Esophagus muscularis mucosa (tissue), 4 donors: ENCODE measurements at regions of chr9 and their contacts with region 1.

Region 1: GRCh38 chr9:92342825-92343488 is 17.2 kb downstream of the CENPP start:
- DNase-seq: no peak
- H3K4me3 ChIP-seq: no peak overlapping the region
- H3K27ac ChIP-seq: peak overlapping the region in 2 of 4 donors; percentile 8 to 37
- H3K4me1 ChIP-seq: peaks cover 0 to 18% (median 14%) of the 10 kb centered on the region in 4 donors
- H3K27me3 ChIP-seq: no peaks in the 10 kb centered on the region
- CTCF ChIP-seq: peak; percentile 30 to 46 (median 45)
- EP300 ChIP-seq: no peak
- POLR2A ChIP-seq: no peak

Region 2: DNA sequence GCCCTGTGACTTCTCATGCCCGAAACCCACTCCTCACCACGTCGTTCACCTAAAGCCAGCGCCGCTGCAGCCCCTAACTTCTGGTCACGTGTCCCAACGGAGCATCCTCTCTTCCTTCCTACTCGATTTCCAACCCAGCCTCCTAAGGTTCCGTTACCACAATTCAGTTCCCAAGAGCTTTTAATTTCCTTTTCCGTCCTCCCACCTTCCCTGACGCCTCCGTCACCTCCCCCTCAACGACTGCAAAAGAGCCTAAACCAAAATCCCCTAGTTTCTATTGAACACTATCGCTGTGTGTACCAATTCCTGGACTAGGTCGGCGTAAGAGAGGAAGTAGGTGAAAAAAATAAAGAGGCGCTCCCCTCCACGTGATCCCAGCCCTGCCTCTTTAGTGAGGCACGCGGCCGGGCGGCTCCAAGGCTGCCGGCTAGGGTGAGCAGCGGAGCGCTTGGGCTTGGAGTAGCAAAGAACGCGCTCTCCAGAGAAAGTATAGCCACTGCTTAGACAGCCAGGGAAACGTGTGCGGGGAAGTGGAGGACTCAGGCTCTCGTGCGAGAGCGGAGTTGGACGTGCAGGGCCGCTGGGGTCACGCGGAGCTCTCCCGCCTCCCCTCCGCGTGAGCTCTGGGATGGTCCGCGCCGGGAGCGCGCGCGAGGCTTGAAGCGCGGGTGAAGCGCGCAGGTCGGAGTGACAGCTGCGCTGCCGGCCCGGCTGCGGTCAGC is 17.5 kb before region 1 on chr9 and contains the starts of genes CENPP and NOL8:
- intact Hi-C with region 1: no loop called
- DNase-seq: peak; percentile 95
- H3K4me3 ChIP-seq: peak within 1 kb of the TSS; percentile 72 to 88 (median 82)
- H3K27ac ChIP-seq: peak within 1 kb of the TSS; percentile 88 to 96 (median 93)
- H3K4me1 ChIP-seq: peaks cover 15 to 24% (median 21%) of the 10 kb centered on the region in 4 donors
- H3K27me3 ChIP-seq: no peaks in the 10 kb centered on the region
- CTCF ChIP-seq: no peak
- EP300 ChIP-seq: no peak
- POLR2A ChIP-seq: no peak
- total RNA-seq, gene CENPP: 1.0 to 5.8 (median 2.0) TPM
- total RNA-seq, gene NOL8: 17.1 to 28.2 (median 22.5) TPM

Region 3: DNA sequence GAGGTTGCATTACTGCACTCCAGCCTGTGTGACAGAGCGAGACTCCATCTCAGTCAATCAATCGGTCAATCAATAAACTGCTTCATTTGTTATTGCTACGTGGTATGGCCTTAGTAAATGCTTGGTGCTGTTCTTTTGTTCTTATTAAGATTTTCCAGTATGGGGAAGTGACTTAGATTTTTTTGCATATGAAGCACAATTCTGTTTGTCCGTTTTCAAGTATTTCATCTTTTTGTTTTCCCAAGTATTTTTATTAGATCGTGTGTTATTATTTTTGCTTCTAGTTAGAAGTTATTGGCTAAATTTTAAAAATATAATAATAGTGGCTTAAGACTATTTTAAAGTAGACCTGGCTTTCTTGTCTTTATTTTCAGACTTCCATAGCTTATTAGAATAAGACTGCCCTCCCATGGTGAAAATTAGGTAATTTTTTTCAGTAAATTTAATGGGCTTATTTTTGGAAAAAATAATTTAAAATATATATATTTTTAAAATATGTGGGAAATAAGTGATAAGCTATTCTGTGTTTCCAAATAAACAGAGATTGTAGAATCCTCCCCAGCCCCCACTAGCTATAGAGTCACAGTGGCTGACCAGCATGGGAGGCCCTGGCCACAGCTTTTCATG is 96.1 kb after region 1 on chr9:
- intact Hi-C with region 1: loop called (anchors 2 kb)
- DNase-seq: no peak
- H3K4me3 ChIP-seq: no peak overlapping the region
- H3K27ac ChIP-seq: no peak overlapping the region
- H3K4me1 ChIP-seq: peaks cover 0 to 11% (median 4%) of the 10 kb centered on the region in 4 donors
- H3K27me3 ChIP-seq: no peaks in the 10 kb centered on the region
- CTCF ChIP-seq: peak; percentile 41 to 52 (median 49)
- EP300 ChIP-seq: no peak
- POLR2A ChIP-seq: no peak